Naive thymus-derived CD4-positive, alpha-beta T cell (primary cell): ENCODE measurements at regions of chr1 and their contacts with region 1.

Region 1: DNA sequence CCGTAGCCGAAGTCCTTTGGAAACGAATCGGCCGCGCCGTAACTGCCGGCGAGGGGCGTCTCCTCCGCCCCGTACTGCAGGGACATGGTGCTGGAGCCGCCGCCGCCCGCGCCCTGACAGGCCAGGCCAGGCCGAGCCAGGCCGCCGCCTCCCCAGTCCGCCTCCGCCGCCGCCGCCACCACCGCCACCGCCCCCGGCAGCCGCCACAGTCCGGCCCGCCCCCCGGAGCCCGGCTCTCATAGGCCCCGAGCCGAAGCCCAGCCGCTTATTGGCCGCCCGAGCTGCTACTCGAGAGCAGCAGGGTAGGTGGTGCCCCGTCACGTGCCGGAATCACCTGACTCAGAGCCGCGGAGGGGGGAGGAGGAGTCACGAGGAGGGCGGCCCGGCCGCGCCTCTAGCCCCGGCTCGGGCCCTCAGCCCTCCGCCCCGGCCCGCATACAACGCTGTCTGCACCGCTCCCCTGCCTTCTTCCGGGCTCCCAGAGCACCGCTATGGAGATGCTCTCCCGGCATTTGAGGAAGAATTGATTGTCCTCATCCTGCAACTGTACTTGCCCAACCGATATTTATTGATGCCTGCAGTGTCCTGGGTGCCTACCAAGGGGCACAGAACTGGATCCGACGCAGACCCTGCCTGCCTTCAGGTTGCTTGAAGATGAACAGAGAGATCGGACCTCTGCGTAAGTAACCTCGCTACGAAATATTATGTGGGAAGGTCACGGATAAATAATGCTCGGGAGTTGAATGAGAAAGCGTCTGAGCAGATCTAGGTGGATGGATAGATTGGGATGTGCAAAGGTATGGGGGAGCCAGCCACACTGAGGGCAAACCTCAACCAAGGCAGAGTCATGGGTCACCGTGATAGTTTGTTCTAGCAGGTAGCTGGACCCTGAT is at the start of gene RRAGC:
- DNase-seq: peak; percentile 92 to 98 (median 96)
- ATAC-seq: peak; percentile 99
- H3K4me3 ChIP-seq: peak within 1 kb of the TSS; percentile 70
- H3K4me3 Mint-ChIP-seq: peak within 1 kb of the TSS; percentile 92 to 99 (median 96)
- H3K27ac ChIP-seq: peak within 1 kb of the TSS; percentile 78
- H3K27ac Mint-ChIP-seq: peak within 1 kb of the TSS; percentile 76 to 98 (median 88)
- H3K4me1 ChIP-seq: peaks cover 20 to 22% of the 10 kb centered on the region in 2 donors
- H3K4me1 Mint-ChIP-seq: peaks cover 29 to 88% (median 61%) of the 10 kb centered on the region in 7 donors
- H3K27me3 ChIP-seq: no peaks in the 10 kb centered on the region
- H3K27me3 Mint-ChIP-seq: no peaks in the 10 kb centered on the region
- total RNA-seq, gene RRAGC: 14.5 to 24.4 (median 16.8) TPM

Region 2: DNA sequence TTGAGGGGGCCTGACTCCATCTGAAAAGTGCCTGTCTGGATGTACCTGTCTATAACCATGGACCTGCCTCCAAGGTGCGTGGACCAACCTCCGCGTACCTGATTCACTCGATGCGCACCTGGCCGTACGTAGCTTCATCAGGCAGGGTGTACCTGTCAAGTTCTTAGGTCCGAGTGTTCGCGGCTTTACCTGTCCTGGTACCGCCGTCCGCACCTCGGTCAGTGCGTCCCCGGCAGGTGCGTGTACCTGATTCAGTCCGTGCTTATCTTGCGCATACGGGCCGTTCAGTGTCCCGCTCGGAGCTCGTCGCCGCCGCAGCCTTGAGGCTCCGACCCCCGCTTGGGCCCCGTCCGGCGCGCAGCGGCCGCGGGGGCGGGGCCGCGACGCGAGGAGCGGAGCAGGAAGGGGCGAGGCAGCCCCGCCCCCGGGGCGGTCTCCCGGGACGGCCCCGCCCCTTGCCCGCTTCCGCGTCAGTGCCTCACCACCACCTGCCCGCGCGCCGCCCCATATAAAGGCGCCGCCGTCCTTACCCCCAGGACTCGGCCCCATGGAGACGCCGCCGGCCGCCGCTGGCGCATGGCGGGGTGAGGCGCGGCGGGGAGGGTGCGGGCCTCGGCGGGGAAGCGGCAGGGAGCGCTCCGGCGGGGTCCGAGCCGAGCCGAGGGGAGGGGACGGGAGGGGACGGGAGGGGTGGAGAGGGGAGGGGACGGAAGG is 1385.6 kb before region 1 on chr1 and contains the start of gene ZC3H12A:
- CTCF ChIA-PET with region 1: no interaction called
- POLR2A ChIA-PET with region 1: no interaction called
- intact Hi-C with region 1: loop called (anchors 5 kb)
- DNase-seq: peak; percentile 87 to 98 (median 93)
- ATAC-seq: peak; percentile 82
- H3K4me3 ChIP-seq: peak within 1 kb of the TSS; percentile 97
- H3K4me3 Mint-ChIP-seq: peak within 1 kb of the TSS; percentile 91 to 99 (median 96)
- H3K27ac ChIP-seq: peak within 1 kb of the TSS; percentile 95
- H3K27ac Mint-ChIP-seq: peak within 1 kb of the TSS; percentile 93 to 99 (median 98)
- H3K4me1 ChIP-seq: peaks cover 28 to 33% of the 10 kb centered on the region in 2 donors
- H3K4me1 Mint-ChIP-seq: peaks cover 43 to 59% (median 54%) of the 10 kb centered on the region in 7 donors
- H3K27me3 ChIP-seq: no peaks in the 10 kb centered on the region
- H3K27me3 Mint-ChIP-seq: no peaks in the 10 kb centered on the region
- total RNA-seq, gene ZC3H12A: 35.0 to 122 (median 46.7) TPM

Region 3: GRCh38 chr1:37859507-37860345 is 1000.1 kb before region 1 on chr1 and contains the start of gene MTF1:
- CTCF ChIA-PET with region 1: no interaction called
- POLR2A ChIA-PET with region 1: no interaction called
- intact Hi-C with region 1: loop called in 1 of 2 experiments (anchors 1 kb)
- DNase-seq: peak; percentile 85 to 98 (median 97)
- ATAC-seq: peak; percentile 99
- H3K4me3 ChIP-seq: peak within 1 kb of the TSS; percentile 94
- H3K4me3 Mint-ChIP-seq: peak within 1 kb of the TSS; percentile 89 to 100 (median 96)
- H3K27ac ChIP-seq: peak within 1 kb of the TSS; percentile 89
- H3K27ac Mint-ChIP-seq: peak within 1 kb of the TSS; percentile 90 to 99 (median 95)
- H3K4me1 ChIP-seq: peaks cover 12 to 19% of the 10 kb centered on the region in 2 donors
- H3K4me1 Mint-ChIP-seq: peaks cover 26 to 39% (median 33%) of the 10 kb centered on the region in 7 donors
- H3K27me3 ChIP-seq: no peaks in the 10 kb centered on the region
- H3K27me3 Mint-ChIP-seq: no peaks in the 10 kb centered on the region
- total RNA-seq, gene MTF1: 22.9 to 45.2 (median 27.1) TPM

Region 4: DNA sequence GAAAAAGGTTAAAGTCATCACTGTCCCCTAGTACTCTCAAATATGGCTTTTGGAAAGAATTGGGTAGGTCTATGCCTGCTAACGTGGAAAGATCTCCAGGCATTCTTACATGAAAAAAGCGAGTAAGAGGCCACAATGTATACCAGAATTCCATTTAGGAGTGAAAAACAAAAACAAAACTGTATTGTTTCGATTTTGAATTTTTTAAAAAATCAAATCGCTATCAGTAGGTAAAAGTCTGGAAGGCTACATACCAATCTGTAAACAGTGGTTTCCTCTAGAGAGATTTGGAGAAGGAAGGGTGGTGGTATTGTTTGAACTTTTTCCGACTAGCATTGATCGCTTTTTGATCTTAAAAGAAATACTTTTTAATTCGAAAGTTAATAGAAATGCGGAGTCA is 56.2 kb before region 1 on chr1:
- CTCF ChIA-PET with region 1: no interaction called
- POLR2A ChIA-PET with region 1: no interaction called
- intact Hi-C with region 1: no loop called
- DNase-seq: no peak
- ATAC-seq: no peak
- H3K4me3 ChIP-seq: no peak overlapping the region
- H3K4me3 Mint-ChIP-seq: peak overlapping the region in 9 of 10 donors; percentile 12 to 76 (median 61)
- H3K27ac ChIP-seq: no peak overlapping the region
- H3K27ac Mint-ChIP-seq: no peak overlapping the region
- H3K4me1 ChIP-seq: no peaks in the 10 kb centered on the region
- H3K4me1 Mint-ChIP-seq: peaks cover 5 to 9% (median 6%) of the 10 kb centered on the region in 7 donors
- H3K27me3 ChIP-seq: peaks cover 6 to 10% of the 10 kb centered on the region in 2 donors
- H3K27me3 Mint-ChIP-seq: peaks cover 53 to 65% (median 61%) of the 10 kb centered on the region in 5 donors

Region 5: GRCh38 chr1:38973659-38974424 is 114.0 kb after region 1 on chr1:
- CTCF ChIA-PET with region 1: no interaction called
- POLR2A ChIA-PET with region 1: no interaction called
- intact Hi-C with region 1: loop called in 1 of 2 experiments (anchors 5 kb)
- DNase-seq: no peak
- ATAC-seq: no peak
- H3K4me3 ChIP-seq: no peak overlapping the region
- H3K4me3 Mint-ChIP-seq: no peak overlapping the region
- H3K27ac ChIP-seq: no peak overlapping the region
- H3K27ac Mint-ChIP-seq: peak overlapping the region in 1 of 9 donors; percentile 38
- H3K4me1 ChIP-seq: peaks cover 0 to 14% of the 10 kb centered on the region in 2 donors
- H3K4me1 Mint-ChIP-seq: peaks cover 2 to 25% (median 15%) of the 10 kb centered on the region in 7 donors
- H3K27me3 ChIP-seq: no peaks in the 10 kb centered on the region
- H3K27me3 Mint-ChIP-seq: peaks cover 0 to 2% (median 0%) of the 10 kb centered on the region in 5 donors

Region 6: DNA sequence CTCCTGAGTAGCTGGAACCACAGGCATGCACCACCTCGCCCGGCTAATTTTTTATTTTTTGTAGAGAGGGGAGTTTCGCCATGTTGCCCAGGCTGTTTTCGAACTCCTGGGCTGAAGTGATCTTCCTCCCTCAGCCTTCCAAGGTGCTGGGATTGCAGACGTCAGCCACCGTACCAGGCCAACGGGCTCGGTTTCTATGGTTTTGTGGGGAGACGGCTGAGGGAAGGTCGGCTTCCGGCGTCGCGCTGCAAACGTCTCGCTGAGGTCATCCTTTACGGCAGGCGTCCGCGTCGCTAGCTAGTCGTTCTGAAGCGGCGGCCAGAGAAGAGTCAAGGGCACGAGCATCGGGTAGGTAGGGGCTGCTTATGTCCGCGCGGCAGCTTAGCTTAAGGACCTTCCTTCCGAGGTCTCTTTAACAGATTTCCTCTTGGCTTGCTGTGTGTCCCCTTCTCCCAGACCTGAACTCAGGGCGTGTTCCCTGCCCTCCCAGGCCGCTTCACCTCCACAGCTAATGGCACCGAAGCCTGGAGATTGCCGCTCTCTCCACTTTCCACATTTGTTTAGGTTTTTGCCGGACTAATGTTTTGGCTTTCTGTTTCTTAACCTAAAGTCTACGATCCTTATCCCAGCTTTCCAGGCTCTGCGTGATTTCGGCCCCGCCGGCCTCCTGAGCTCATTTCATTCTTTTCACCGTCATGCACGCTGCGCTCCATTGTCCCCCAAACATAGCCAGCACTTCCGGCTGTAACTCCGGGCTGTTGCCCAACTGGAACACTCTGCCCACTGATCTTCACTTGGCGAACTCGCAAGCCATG is 166.5 kb after region 1 on chr1 and contains the start of gene NDUFS5:
- CTCF ChIA-PET with region 1: no interaction called
- POLR2A ChIA-PET with region 1: interaction called, 6 read pairs
- intact Hi-C with region 1: loop called (anchors 1 to 2 kb)
- DNase-seq: peak; percentile 53 to 84 (median 80)
- ATAC-seq: peak; percentile 96
- H3K4me3 ChIP-seq: peak within 1 kb of the TSS; percentile 93
- H3K4me3 Mint-ChIP-seq: peak within 1 kb of the TSS; percentile 90 to 100 (median 96)
- H3K27ac ChIP-seq: peak within 1 kb of the TSS; percentile 94
- H3K27ac Mint-ChIP-seq: peak within 1 kb of the TSS; percentile 93 to 99 (median 97)
- H3K4me1 ChIP-seq: peaks cover 18% of the 10 kb centered on the region in 2 donors
- H3K4me1 Mint-ChIP-seq: peaks cover 19 to 37% (median 28%) of the 10 kb centered on the region in 7 donors
- H3K27me3 ChIP-seq: no peaks in the 10 kb centered on the region
- H3K27me3 Mint-ChIP-seq: peaks cover 0 to 6% (median 0%) of the 10 kb centered on the region in 5 donors
- total RNA-seq, gene NDUFS5: 95.1 to 128 (median 115) TPM

Region 7: DNA sequence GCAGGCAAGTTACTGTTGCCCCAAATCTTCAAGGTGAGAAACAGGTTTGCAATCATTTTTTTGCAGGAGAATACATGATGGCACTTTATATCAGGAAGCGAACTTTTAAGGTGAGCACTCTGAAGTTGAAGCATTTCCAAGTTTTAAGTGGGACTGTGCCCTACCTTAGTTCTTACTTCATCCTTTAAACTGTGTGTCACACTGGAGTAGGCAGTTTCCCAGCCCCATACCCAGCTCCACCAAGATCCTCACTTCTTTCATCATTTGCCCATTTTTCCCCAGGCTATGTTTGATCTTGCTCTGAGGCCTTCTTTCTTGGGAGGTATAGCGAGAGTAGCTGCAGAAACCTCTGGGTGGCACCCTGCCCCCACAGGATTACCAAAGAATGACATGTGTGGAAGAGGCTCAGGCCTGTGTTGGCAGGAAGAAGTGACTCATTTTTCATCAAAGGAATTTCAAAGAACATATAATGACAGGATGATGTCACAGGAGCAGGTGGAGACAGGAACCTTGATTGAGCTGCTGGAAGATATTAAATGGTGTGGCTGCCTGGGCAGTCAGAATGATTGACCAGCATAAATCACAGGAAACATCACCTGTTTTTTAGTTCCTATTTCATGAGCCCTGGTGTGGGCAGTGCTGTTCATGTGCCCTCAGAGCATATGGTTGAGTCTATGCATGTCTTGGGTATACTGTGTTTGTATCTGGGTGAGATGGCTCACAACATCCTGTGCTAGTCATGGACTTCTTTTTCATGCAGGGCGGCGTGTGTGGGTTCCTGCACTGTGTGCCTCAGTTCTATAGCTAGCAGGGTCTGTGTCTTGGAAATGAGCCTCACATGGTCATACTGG is 323.9 kb after region 1 on chr1:
- CTCF ChIA-PET with region 1: no interaction called
- POLR2A ChIA-PET with region 1: no interaction called
- intact Hi-C with region 1: loop called in 1 of 2 experiments (anchors 5 kb)
- DNase-seq: peak; percentile 38 to 94 (median 87)
- ATAC-seq: peak; percentile 97
- H3K4me3 ChIP-seq: no peak overlapping the region
- H3K4me3 Mint-ChIP-seq: peak overlapping the region in 8 of 10 donors; percentile 8 to 51 (median 39)
- H3K27ac ChIP-seq: peak overlapping the region; percentile 76
- H3K27ac Mint-ChIP-seq: peak overlapping the region; percentile 88 to 98 (median 97)
- H3K4me1 ChIP-seq: peaks cover 7 to 16% of the 10 kb centered on the region in 2 donors
- H3K4me1 Mint-ChIP-seq: peaks cover 19 to 50% (median 35%) of the 10 kb centered on the region in 7 donors
- H3K27me3 ChIP-seq: no peaks in the 10 kb centered on the region
- H3K27me3 Mint-ChIP-seq: no peaks in the 10 kb centered on the region